ENCODE measurements at regions of chr19 and their contacts with region 1.

Region 1: GRCh38 chr19:10269333-10270179 is 1.4 kb upstream of the ICAM1 start:
- DNase-seq: peak; percentile 88
- ATAC-seq: peak; percentile 48
- H3K4me3 Mint-ChIP-seq: peak overlapping the region; percentile 87
- H3K27ac Mint-ChIP-seq: peak overlapping the region; percentile 92
- H3K4me1 Mint-ChIP-seq: peaks cover 38% of the 10 kb centered on the region
- H3K27me3 Mint-ChIP-seq: no peaks in the 10 kb centered on the region
- CTCF ChIP-seq: peak; percentile 71

Region 2: DNA sequence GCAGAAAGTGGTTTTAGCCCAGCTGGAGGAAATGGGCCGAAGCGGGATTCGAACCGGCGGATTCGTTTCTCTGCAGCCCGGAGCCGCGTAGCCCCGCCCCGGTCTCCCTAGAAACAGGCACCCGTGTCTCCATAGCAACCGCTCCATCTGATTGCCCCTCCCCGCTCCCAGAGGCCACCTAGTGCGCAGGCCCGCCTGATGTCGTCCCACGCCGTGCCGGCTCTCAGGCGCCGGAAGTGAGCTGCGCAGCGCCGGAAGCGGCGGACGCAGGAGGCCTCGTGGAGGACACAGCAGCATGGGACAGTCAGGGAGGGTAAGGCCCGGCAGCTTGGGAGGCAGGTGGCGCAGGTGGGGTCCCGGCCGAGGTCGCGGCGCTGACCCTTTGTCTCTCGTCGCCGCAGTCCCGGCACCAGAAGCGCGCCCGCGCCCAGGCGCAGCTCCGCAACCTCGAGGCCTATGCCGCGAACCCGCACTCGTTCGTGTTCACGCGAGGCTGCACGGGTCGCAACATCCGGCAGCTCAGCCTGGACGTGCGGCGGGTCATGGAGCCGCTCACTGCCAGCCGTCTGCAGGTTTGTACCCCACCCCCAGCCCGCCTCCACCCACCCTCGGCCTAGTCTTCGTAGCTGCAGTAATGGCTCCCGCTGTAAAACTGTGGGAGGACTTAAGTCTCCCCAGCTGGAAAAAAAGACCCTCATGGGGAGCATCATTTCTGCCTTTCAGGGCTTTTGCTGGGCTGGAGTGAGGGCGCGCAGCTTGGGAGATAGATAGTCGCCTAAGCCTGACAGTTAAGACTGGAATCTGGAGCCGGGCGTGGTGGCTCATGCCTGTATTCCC is 163.2 kb before region 1 on chr19 and contains the start of gene PPAN:
- CTCF ChIA-PET with region 1: no interaction called
- POLR2A ChIA-PET with region 1: interaction called, 14 read pairs
- intact Hi-C with region 1: no loop called
- DNase-seq: peak; percentile 91
- ATAC-seq: peak; percentile 54
- H3K4me3 Mint-ChIP-seq: peak within 1 kb of the TSS; percentile 86
- H3K27ac Mint-ChIP-seq: peak within 1 kb of the TSS; percentile 99
- H3K4me1 Mint-ChIP-seq: peaks cover 73% of the 10 kb centered on the region
- H3K27me3 Mint-ChIP-seq: no peaks in the 10 kb centered on the region
- CTCF ChIP-seq: no peak
- total RNA-seq, gene PPAN: 107 and 119 TPM in 2 replicates

Region 3: GRCh38 chr19:10228920-10229319 is 40.6 kb before region 1 on chr19:
- CTCF ChIA-PET with region 1: no interaction called
- POLR2A ChIA-PET with region 1: no interaction called
- intact Hi-C with region 1: no loop called
- DNase-seq: no peak
- ATAC-seq: peak; percentile 35
- H3K4me3 Mint-ChIP-seq: peak overlapping the region; percentile 44
- H3K27ac Mint-ChIP-seq: no peak overlapping the region
- H3K4me1 Mint-ChIP-seq: peaks cover 34% of the 10 kb centered on the region
- H3K27me3 Mint-ChIP-seq: no peaks in the 10 kb centered on the region
- CTCF ChIP-seq: no peak

Region 4: GRCh38 chr19:10251792-10252694 is 17.5 kb before region 1 on chr19 and contains the start of gene MRPL4:
- CTCF ChIA-PET with region 1: interaction called, 10 read pairs
- POLR2A ChIA-PET with region 1: interaction called, 6 read pairs
- intact Hi-C with region 1: no loop called
- DNase-seq: peak; percentile 92
- ATAC-seq: peak; percentile 95
- H3K4me3 Mint-ChIP-seq: peak within 1 kb of the TSS; percentile 98
- H3K27ac Mint-ChIP-seq: peak within 1 kb of the TSS; percentile 96
- H3K4me1 Mint-ChIP-seq: peaks cover 33% of the 10 kb centered on the region
- H3K27me3 Mint-ChIP-seq: no peaks in the 10 kb centered on the region
- CTCF ChIP-seq: no peak
- total RNA-seq, gene MRPL4: 66.9 and 68.3 TPM in 2 replicates

Region 5: GRCh38 chr19:10286803-10287737 is 17.5 kb after region 1 on chr19 and contains the start of gene ICAM4:
- CTCF ChIA-PET with region 1: interaction called, 12 read pairs
- POLR2A ChIA-PET with region 1: interaction called, 128 read pairs
- intact Hi-C with region 1: loop called (anchors 1 kb)
- DNase-seq: no peak
- ATAC-seq: no peak
- H3K4me3 Mint-ChIP-seq: peak within 1 kb of the TSS; percentile 46
- H3K27ac Mint-ChIP-seq: peak within 1 kb of the TSS; percentile 53
- H3K4me1 Mint-ChIP-seq: peaks cover 67% of the 10 kb centered on the region
- H3K27me3 Mint-ChIP-seq: peaks cover 24% of the 10 kb centered on the region
- CTCF ChIP-seq: no peak
- total RNA-seq, gene ICAM4: 0.71 and 0.95 TPM in 2 replicates

Region 6: GRCh38 chr19:10332955-10333757 is 63.6 kb after region 1 on chr19 and contains the start of gene RAVER1:
- CTCF ChIA-PET with region 1: interaction called, 3 read pairs
- POLR2A ChIA-PET with region 1: interaction called, 54 read pairs
- intact Hi-C with region 1: loop called (anchors 1 kb)
- DNase-seq: peak; percentile 93
- ATAC-seq: peak; percentile 97
- H3K4me3 Mint-ChIP-seq: peak within 1 kb of the TSS; percentile 96
- H3K27ac Mint-ChIP-seq: peak within 1 kb of the TSS; percentile 96
- H3K4me1 Mint-ChIP-seq: peaks cover 26% of the 10 kb centered on the region
- H3K27me3 Mint-ChIP-seq: no peaks in the 10 kb centered on the region
- CTCF ChIP-seq: no peak
- total RNA-seq, gene RAVER1: 77.0 and 80.8 TPM in 2 replicates

Region 7: GRCh38 chr19:10388957-10389356 is 119.4 kb after region 1 on chr19:
- CTCF ChIA-PET with region 1: interaction called, 211 read pairs
- POLR2A ChIA-PET with region 1: interaction called, 120 read pairs
- intact Hi-C with region 1: loop called (anchors 1 kb)
- DNase-seq: peak; percentile 77
- ATAC-seq: peak; percentile 56
- H3K4me3 Mint-ChIP-seq: no peak overlapping the region
- H3K27ac Mint-ChIP-seq: peak overlapping the region; percentile 35
- H3K4me1 Mint-ChIP-seq: peaks cover 23% of the 10 kb centered on the region
- H3K27me3 Mint-ChIP-seq: no peaks in the 10 kb centered on the region
- CTCF ChIP-seq: peak; percentile 92

Region 8: DNA sequence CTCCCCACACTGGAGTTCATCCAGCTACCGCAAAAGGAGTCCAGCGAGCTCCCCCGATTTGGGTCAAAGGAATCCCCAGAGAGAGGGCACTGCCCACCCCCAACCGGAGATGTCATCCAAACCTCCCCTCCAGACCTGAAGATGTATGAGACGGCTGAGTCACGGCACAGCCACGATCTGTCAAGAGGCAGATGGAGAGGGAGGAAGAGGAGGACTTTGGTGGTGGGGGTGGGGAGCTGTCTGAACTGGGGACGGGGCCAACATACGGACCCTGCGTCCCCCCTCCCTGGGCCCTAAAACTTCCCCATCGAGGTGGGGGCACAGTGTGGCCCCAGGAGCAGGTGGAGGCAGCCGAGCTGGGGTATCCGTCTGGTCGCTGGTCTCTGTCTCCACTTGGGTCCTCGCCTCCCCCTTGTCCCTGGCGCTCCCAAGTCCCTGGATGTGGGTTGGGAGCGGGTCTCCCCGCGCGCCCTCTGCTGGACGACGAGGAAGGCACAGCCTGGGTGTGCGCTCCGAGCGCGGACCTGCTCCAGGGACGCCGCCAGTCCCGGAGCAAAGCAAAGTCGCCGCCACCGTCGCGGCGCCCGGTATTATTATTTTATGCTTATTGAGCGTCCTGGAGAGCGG is 154.6 kb after region 1 on chr19:
- CTCF ChIA-PET with region 1: no interaction called
- POLR2A ChIA-PET with region 1: interaction called, 10 read pairs
- intact Hi-C with region 1: loop called (anchors 1 kb)
- DNase-seq: no peak
- ATAC-seq: peak; percentile 9
- H3K4me3 Mint-ChIP-seq: peak overlapping the region; percentile 85
- H3K27ac Mint-ChIP-seq: peak overlapping the region; percentile 72
- H3K4me1 Mint-ChIP-seq: peaks cover 87% of the 10 kb centered on the region
- H3K27me3 Mint-ChIP-seq: peaks cover 31% of the 10 kb centered on the region
- CTCF ChIP-seq: peak; percentile 42